ENCODE measurements at regions of chr20 and their contacts with region 1.

Region 1: DNA sequence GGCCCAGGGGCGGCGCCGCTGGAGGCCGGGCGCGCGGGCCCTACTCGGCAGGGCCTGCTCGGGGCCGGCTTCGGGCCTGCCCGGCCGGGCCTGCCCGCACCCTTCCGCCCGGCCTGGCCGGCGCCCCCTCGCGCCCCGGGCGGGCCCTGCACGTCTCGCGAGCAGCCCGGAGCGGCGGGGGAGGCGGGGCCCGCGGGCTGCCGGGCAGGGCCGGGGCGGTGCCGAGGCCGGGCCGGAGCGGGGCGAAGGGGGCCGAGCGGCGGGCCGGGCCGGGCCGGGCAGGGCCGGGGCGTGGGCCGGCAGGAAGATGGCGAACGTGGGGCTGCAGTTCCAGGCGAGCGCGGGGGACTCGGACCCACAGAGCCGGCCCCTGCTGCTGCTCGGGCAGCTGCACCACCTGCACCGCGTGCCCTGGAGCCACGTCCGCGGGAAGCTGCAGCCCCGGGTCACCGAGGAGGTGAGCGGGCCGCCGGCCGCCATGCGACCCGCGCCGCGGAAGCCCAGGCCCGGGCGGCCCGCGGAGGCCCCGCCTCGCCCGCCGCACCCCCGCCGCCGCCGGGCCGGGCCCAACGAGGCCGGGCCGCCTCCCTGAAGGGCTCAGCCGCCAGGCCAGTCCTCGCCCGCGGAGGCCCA is at the start of gene NPEPL1:
- DNase-seq: peak; percentile 56
- H3K4me3 Mint-ChIP-seq: peak within 1 kb of the TSS; percentile 62
- H3K27ac Mint-ChIP-seq: peak within 1 kb of the TSS; percentile 64
- H3K4me1 Mint-ChIP-seq: peaks cover 5% of the 10 kb centered on the region
- H3K27me3 Mint-ChIP-seq: no peaks in the 10 kb centered on the region
- CTCF ChIP-seq: no peak
- total RNA-seq, gene NPEPL1: 23.4 and 25.8 TPM in 2 replicates

Region 2: GRCh38 chr20:58703264-58703663 is 10.6 kb after region 1 on chr20:
- CTCF ChIA-PET with region 1: interaction called, 10 read pairs
- POLR2A ChIA-PET with region 1: interaction called, 4 read pairs
- intact Hi-C with region 1: no loop called
- DNase-seq: no peak
- H3K4me3 Mint-ChIP-seq: no peak overlapping the region
- H3K27ac Mint-ChIP-seq: no peak overlapping the region
- H3K4me1 Mint-ChIP-seq: no peaks in the 10 kb centered on the region
- H3K27me3 Mint-ChIP-seq: no peaks in the 10 kb centered on the region
- CTCF ChIP-seq: peak; percentile 19

Region 3: GRCh38 chr20:58778760-58779159 is 86.0 kb after region 1 on chr20:
- CTCF ChIA-PET with region 1: no interaction called
- POLR2A ChIA-PET with region 1: no interaction called
- intact Hi-C with region 1: no loop called
- DNase-seq: no peak
- H3K4me3 Mint-ChIP-seq: no peak overlapping the region
- H3K27ac Mint-ChIP-seq: no peak overlapping the region
- H3K4me1 Mint-ChIP-seq: no peaks in the 10 kb centered on the region
- H3K27me3 Mint-ChIP-seq: peaks cover 97% of the 10 kb centered on the region
- CTCF ChIP-seq: no peak

Region 4: DNA sequence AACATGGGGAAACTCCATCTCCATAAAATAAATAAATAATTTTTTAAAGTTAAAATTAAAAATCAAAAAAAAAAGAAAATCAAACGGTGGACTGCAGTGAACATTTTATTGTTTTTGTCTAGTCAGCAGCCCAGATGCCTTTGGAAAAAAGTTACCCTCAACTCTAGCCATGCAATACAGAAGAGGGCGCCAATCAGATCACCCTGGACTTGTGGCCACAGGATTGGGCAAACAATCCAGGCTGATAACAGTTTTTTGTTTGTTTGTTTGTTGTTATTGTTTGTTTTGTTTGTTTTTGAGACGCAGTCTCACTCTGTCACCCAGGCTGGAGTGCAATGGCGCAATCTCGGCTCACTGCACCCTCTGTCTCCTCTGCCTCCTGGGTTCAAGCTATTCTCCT is 257.9 kb after region 1 on chr20:
- CTCF ChIA-PET with region 1: no interaction called
- POLR2A ChIA-PET with region 1: no interaction called
- intact Hi-C with region 1: no loop called
- DNase-seq: peak; percentile 6
- H3K4me3 Mint-ChIP-seq: no peak overlapping the region
- H3K27ac Mint-ChIP-seq: no peak overlapping the region
- H3K4me1 Mint-ChIP-seq: no peaks in the 10 kb centered on the region
- H3K27me3 Mint-ChIP-seq: peaks cover 42% of the 10 kb centered on the region
- CTCF ChIP-seq: no peak